Endothelial cell of umbilical vein (primary cell): ENCODE measurements at regions of chr7 and their contacts with region 1.

Region 1: GRCh38 chr7:82481499-82482097 is 38.0 kb upstream of the CACNA2D1 start:
- DNase-seq: peak; percentile 47
- H3K4me3 ChIP-seq: no peak overlapping the region
- H3K27ac ChIP-seq: no peak overlapping the region
- H3K4me1 ChIP-seq: no peaks in the 10 kb centered on the region
- H3K27me3 ChIP-seq: no peaks in the 10 kb centered on the region
- CTCF ChIP-seq: peak; percentile 33 to 55
- POLR2A ChIP-seq: no peak

Region 2: DNA sequence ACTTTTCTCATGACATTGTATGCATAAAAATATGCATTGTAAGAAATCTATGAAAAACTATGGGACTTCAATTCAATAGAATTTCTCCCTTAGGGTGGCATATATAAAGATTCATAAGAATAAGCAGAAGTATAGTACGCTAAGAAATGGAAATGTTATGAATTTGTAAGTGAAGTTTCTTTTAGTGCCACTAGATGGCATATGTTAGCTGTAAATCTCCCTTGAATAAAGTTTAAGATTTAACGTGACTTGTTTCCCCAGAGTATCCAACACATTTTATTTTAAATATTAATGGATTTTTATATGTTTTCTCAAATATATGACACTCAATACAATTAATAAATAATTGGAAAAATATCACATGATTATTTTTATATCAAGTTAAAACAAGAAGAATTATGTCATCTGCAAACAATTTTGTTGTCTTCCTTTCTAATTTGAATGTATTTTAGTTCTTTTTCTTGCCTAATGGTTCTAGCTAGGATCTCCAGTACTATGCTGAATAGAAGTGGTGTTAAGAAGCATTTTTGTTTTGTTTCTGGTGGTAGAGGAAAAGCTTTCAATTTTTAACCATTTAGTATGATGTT is 998.9 kb before region 1 on chr7:
- CTCF ChIA-PET with region 1: interaction called, 3 read pairs
- POLR2A ChIA-PET with region 1: no interaction called
- dilution Hi-C with region 1: no loop called
- intact Hi-C with region 1: loop called (anchors 5 kb)
- DNase-seq: peak; percentile 40
- H3K4me3 ChIP-seq: no peak overlapping the region
- H3K27ac ChIP-seq: no peak overlapping the region
- H3K4me1 ChIP-seq: no peaks in the 10 kb centered on the region
- H3K27me3 ChIP-seq: no peaks in the 10 kb centered on the region
- CTCF ChIP-seq: peak; percentile 14 to 27
- POLR2A ChIP-seq: no peak

Region 3: GRCh38 chr7:82044497-82045080 is 437.0 kb before region 1 on chr7:
- CTCF ChIA-PET with region 1: interaction called, 28 read pairs
- POLR2A ChIA-PET with region 1: no interaction called
- dilution Hi-C with region 1: no loop called
- intact Hi-C with region 1: loop called (anchors 1 kb)
- DNase-seq: peak; percentile 67
- H3K4me3 ChIP-seq: no peak overlapping the region
- H3K27ac ChIP-seq: no peak overlapping the region
- H3K4me1 ChIP-seq: peaks cover 27% of the 10 kb centered on the region
- H3K27me3 ChIP-seq: no peaks in the 10 kb centered on the region
- CTCF ChIP-seq: peak; percentile 36
- POLR2A ChIP-seq: no peak

Region 4: GRCh38 chr7:82164813-82165212 is 316.8 kb before region 1 on chr7:
- CTCF ChIA-PET with region 1: interaction called, 6 read pairs
- POLR2A ChIA-PET with region 1: no interaction called
- dilution Hi-C with region 1: no loop called
- intact Hi-C with region 1: loop called (anchors 2 kb)
- DNase-seq: peak; percentile 28
- H3K4me3 ChIP-seq: no peak overlapping the region
- H3K27ac ChIP-seq: no peak overlapping the region
- H3K4me1 ChIP-seq: no peaks in the 10 kb centered on the region
- H3K27me3 ChIP-seq: no peaks in the 10 kb centered on the region
- CTCF ChIP-seq: peak; percentile 8 to 12
- POLR2A ChIP-seq: no peak

Region 5: DNA sequence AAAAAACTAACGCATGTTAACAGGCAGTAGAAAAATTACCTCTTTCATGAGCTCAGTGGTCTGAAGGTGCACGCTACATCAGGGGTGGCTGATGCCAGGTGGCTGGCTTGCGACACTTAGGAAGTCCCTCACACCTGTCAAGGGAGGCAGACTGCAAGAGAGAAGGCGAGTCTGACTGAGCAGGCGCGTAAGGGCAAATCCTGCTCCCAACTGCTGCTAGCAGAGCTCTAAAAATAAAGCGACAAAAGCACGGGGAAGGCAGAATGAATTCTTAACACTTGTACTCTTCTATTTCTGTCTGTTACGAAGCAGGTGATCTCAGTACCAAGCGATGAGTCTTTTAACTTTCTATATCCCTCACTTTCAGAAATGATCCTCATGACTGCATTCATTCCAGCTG is 71.1 kb before region 1 on chr7:
- CTCF ChIA-PET with region 1: no interaction called
- POLR2A ChIA-PET with region 1: no interaction called
- dilution Hi-C with region 1: no loop called
- intact Hi-C with region 1: no loop called
- DNase-seq: no peak
- H3K4me3 ChIP-seq: no peak overlapping the region
- H3K27ac ChIP-seq: no peak overlapping the region
- H3K4me1 ChIP-seq: no peaks in the 10 kb centered on the region
- H3K27me3 ChIP-seq: no peaks in the 10 kb centered on the region
- CTCF ChIP-seq: no peak
- POLR2A ChIP-seq: no peak

Region 6: GRCh38 chr7:82590531-82590930 is 108.9 kb after region 1 on chr7:
- CTCF ChIA-PET with region 1: no interaction called
- POLR2A ChIA-PET with region 1: no interaction called
- dilution Hi-C with region 1: no loop called
- intact Hi-C with region 1: no loop called
- DNase-seq: no peak
- H3K4me3 ChIP-seq: no peak overlapping the region
- H3K27ac ChIP-seq: no peak overlapping the region
- H3K4me1 ChIP-seq: peaks cover 23% of the 10 kb centered on the region
- H3K27me3 ChIP-seq: no peaks in the 10 kb centered on the region
- CTCF ChIP-seq: no peak
- POLR2A ChIP-seq: no peak

Region 7: DNA sequence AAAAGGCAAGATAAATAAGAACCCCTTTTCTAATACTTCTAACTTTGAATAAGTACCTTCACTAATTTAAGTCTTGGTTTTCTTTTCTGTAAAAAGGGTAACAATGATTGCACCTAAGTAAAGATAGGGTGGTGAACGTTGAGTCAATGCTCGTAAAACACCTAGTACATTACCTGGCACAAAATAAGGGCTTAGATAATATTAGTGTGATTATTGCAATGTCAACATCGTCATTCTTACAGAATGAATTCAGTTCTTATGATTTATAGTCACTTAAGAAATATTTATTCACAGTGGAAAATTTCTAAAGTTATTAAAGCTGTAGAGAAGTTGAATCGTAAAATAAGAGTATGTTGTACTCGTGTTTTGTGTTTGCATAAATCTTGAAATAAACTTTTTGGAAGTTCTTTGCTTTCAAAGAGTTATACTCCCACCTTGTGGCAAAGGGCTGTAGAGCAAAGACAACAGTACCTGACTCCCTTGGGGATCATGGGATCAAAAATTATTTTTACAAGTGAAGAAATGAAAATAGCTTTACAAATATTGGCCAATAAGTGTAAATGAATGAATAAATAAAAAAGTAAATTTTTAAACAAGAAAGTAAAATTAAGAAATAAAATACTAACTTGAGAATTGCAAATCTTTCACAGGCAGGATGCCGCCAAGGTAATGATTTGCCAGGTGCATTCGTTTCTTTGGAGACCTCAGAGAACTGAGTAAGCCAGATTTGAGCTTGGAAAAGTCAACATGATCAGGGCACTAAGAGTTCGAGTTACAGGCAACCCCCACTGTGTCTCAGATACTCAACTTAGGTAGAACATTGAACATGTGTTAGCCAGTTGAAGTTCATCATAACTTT is 247.8 kb after region 1 on chr7:
- CTCF ChIA-PET with region 1: interaction called, 3 read pairs
- POLR2A ChIA-PET with region 1: no interaction called
- dilution Hi-C with region 1: no loop called
- intact Hi-C with region 1: loop called (anchors 5 kb)
- DNase-seq: peak; percentile 60
- H3K4me3 ChIP-seq: no peak overlapping the region
- H3K27ac ChIP-seq: no peak overlapping the region
- H3K4me1 ChIP-seq: no peaks in the 10 kb centered on the region
- H3K27me3 ChIP-seq: no peaks in the 10 kb centered on the region
- CTCF ChIP-seq: peak; percentile 48 to 62
- POLR2A ChIP-seq: no peak

Region 8: DNA sequence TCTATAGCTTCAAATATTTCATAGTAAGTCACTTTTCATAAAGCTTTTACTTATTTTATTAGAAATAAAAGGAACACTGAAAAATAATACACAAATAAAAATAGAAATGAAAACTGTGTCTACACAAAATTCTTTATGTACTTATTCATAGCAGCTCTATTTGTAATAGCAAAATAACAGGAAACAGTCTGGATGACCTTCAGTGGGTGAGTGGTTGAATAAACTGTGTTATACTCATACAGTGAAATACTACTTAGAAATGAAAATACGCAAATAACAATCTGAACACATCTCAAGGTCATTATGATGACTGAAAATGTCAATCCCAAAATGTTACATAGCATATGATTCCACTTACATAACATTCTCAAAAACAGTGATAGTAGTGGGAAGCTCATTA is 819.8 kb after region 1 on chr7:
- CTCF ChIA-PET with region 1: no interaction called
- POLR2A ChIA-PET with region 1: no interaction called
- dilution Hi-C with region 1: no loop called
- intact Hi-C with region 1: no loop called
- DNase-seq: peak; percentile 90
- H3K4me3 ChIP-seq: no peak overlapping the region
- H3K27ac ChIP-seq: peak overlapping the region; percentile 82
- H3K4me1 ChIP-seq: peaks cover 10% of the 10 kb centered on the region
- H3K27me3 ChIP-seq: no peaks in the 10 kb centered on the region
- CTCF ChIP-seq: no peak
- POLR2A ChIP-seq: no peak